PC-9 (cell line): ENCODE measurements at regions of chr1 and their contacts with region 1.

Region 1: DNA sequence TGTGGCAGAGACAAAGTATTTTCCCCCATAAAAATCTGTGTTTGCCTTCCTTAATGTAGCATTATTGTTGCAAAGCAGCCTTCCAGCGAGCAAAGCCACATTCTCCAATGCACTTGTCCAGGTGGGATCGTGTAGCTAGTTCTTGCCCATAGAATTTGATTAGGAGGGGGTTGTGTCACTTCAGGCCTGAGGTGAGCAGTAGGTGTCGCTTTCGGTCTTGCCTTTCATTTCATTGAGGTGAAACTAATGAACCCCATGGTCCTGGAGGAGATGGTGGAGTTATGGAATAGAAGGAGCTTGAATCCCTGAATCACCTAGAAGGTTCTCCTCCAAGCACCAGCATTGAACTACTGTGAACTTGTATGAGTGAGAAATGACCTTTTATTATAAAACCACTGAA is 318.9 kb upstream of the PBX1 start:
- DNase-seq: peak in 1 of 2 experiments; percentile 5
- H3K4me3 ChIP-seq: no peak overlapping the region
- H3K27ac ChIP-seq: no peak overlapping the region
- H3K4me1 ChIP-seq: no peaks in the 10 kb centered on the region
- H3K27me3 ChIP-seq: no peaks in the 10 kb centered on the region
- CTCF ChIP-seq: no peak

Region 2: GRCh38 chr1:163561580-163562295 is 678.3 kb before region 1 on chr1:
- CTCF ChIA-PET with region 1: no interaction called
- POLR2A ChIA-PET with region 1: no interaction called
- intact Hi-C with region 1: no loop called
- DNase-seq: no peak
- H3K4me3 ChIP-seq: no peak overlapping the region
- H3K27ac ChIP-seq: no peak overlapping the region
- H3K4me1 ChIP-seq: no peaks in the 10 kb centered on the region
- H3K27me3 ChIP-seq: no peaks in the 10 kb centered on the region
- CTCF ChIP-seq: peak; percentile 61

Region 3: DNA sequence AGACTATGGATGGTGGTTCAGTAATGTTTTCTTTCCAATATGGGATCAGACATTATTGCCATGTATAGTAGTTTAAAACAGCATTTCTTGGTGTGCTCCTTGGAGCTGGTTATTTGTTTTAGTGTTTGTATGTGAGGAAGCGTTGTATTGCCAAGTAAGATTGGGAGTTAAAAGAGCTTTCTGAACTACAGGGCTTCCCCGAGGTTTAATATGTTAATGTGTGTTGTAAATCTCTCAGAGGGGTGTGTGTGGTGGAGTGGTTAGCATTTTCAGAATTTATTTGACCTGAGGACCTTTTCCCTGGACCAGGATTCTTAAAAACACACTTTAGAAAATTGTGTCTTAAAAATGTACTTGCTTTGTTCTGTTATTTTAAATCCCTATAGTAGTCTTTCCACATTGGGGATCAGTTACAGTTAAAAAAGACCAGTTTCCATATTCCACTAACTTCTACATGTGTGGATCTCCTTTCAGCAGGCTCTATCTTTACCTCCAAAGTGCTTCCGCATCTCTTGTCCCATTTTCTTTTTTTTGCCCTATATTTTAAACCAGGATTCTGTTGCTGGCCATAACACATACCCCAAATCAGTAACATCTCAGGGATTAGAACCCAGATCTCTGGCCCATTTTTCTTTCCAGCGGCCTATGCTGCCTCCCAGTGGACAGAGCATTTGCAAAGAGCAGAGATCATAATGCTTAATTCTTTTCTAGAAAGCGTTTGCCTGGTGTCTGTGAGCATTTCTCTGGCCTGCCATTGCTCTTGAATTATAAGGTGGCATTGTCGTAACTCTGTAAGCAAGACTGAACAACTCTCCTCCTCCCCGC is 377.5 kb after region 1 on chr1:
- CTCF ChIA-PET with region 1: no interaction called
- POLR2A ChIA-PET with region 1: no interaction called
- intact Hi-C with region 1: loop called (anchors 5 kb)
- DNase-seq: no peak
- H3K4me3 ChIP-seq: no peak overlapping the region
- H3K27ac ChIP-seq: no peak overlapping the region
- H3K4me1 ChIP-seq: peaks cover 32% of the 10 kb centered on the region
- H3K27me3 ChIP-seq: no peaks in the 10 kb centered on the region
- CTCF ChIP-seq: peak; percentile 62